GM12878 (cell line): ENCODE measurements at regions of chr4 and their contacts with region 1.

Region 1: DNA sequence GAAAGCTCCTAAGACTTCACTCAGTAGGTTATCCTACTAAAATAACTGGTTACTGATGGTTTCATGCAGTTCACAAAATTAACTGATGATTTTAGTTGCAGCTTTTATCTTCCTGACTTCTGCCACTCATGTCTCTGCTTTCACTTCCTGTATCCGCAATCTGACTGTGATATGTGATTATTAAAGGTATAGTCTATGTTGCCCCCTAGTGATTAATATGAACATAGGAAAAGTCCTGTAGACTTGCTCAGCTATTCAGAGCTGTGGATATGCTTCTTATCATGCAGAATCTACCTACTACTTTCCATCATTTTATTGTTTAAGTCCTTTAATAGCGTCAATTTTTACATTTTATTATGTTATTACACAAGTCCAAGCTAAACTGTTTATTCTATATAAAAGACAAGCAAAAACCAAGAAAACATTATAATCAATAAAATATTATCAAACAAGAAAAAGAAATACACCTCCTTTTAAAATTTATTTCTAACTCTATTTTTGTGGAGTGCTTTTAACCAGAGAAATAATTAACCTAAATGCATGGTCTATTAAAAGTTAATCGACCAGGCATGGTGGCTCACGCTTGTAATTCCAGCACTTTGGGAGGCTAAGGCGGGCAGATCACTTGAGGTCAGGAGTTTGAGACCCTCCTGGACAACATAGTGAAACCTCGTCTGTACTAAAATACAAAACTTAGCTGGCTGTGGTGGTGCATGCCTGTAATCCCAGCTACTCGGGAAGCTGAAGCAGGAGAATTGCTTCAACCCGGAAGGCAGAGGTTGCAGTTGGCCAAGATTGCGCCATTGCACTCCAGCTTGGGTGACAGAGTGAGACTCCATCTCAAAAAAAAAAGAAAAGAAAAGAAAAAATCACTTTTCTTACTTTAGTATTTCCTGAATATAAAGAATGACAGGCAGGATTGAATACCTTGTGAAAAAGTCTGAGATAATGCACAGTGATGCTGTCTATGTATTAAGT is 40.4 kb upstream of the TLR2 start:
- DNase-seq: peak; percentile 50
- ATAC-seq: peak; percentile 88
- H3K4me3 ChIP-seq: no peak overlapping the region
- H3K27ac ChIP-seq: no peak overlapping the region
- H3K4me1 ChIP-seq: peaks cover 6% of the 10 kb centered on the region; the same call in 1 of the 2 replicates
- H3K27me3 ChIP-seq: no peaks in the 10 kb centered on the region
- CTCF ChIP-seq: peak; percentile 50 to 65 (median 54); a peak in 5 of 6 replicates
- EP300 ChIP-seq: no peak
- POLR2A ChIP-seq: no peak
- RAD21 ChIP-seq: peak; percentile 78

Region 2: GRCh38 chr4:153142700-153143438 is 500.8 kb before region 1 on chr4:
- CTCF ChIA-PET with region 1: interaction called, 14 read pairs
- POLR2A ChIA-PET with region 1: interaction called, 3 read pairs
- RAD21 ChIA-PET with region 1: interaction called, 10 read pairs
- SMC1A ChIA-PET with region 1: interaction called, 6 read pairs
- in situ Hi-C with region 1: loop called (anchors 10 kb)
- intact Hi-C with region 1: loop called (anchors 2 kb)
- DNase-seq: no peak
- ATAC-seq: peak; percentile 74
- H3K4me3 ChIP-seq: no peak overlapping the region
- H3K27ac ChIP-seq: no peak overlapping the region
- H3K4me1 ChIP-seq: no peaks in the 10 kb centered on the region
- H3K27me3 ChIP-seq: peaks cover 2 to 4% of the 10 kb centered on the region in 2 experiments; a peak in 2 of 4 replicates
- CTCF ChIP-seq: peak; percentile 60 to 79 (median 63)
- EP300 ChIP-seq: no peak
- POLR2A ChIP-seq: no peak
- RAD21 ChIP-seq: peak; percentile 81

Region 3: DNA sequence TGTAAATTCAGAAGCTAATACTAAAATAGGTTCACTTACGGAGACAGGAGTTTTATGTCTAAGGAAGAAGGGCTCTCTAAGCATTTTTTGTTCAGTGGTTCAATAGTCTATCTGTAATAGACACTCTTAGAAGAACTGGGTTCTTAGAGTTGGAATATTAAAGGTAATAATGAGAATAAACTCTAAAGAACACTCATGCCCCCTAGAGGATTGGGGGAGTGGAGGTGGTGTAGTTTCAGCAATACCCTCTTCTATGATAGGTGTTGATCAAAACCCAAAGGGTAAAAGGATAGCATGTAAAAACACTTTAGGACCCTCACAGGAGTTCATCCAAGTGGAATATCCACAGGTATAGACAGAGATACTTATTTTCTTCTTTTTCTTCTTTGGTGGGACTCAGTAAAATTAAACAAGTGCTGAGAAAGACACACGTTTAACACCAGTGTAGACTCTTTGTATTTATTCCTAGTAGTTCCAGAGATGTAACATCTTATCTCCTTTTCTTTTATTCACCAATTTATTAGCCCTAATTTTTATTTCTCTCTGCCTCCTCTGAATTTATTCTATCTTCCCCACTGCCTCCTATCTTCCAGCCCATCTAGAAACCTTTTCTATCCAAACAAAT is 324.9 kb before region 1 on chr4:
- CTCF ChIA-PET with region 1: interaction called, 13 read pairs
- POLR2A ChIA-PET with region 1: no interaction called
- RAD21 ChIA-PET with region 1: interaction called, 5 read pairs
- SMC1A ChIA-PET with region 1: interaction called, 4 read pairs
- in situ Hi-C with region 1: no loop called
- intact Hi-C with region 1: no loop called
- DNase-seq: no peak
- ATAC-seq: peak; percentile 88
- H3K4me3 ChIP-seq: no peak overlapping the region
- H3K27ac ChIP-seq: no peak overlapping the region
- H3K4me1 ChIP-seq: no peaks in the 10 kb centered on the region
- H3K27me3 ChIP-seq: no peaks in the 10 kb centered on the region
- CTCF ChIP-seq: peak; percentile 62 to 68 (median 66)
- EP300 ChIP-seq: no peak
- POLR2A ChIP-seq: no peak
- RAD21 ChIP-seq: peak; percentile 78

Region 4: GRCh38 chr4:153426207-153426885 is 217.3 kb before region 1 on chr4:
- CTCF ChIA-PET with region 1: interaction called, 10 read pairs
- POLR2A ChIA-PET with region 1: no interaction called
- RAD21 ChIA-PET with region 1: interaction called, 33 read pairs
- SMC1A ChIA-PET with region 1: interaction called, 6 read pairs
- in situ Hi-C with region 1: no loop called
- intact Hi-C with region 1: no loop called
- DNase-seq: no peak
- ATAC-seq: peak; percentile 58
- H3K4me3 ChIP-seq: no peak overlapping the region
- H3K27ac ChIP-seq: 0 out of 2 replicates have a peak overlapping the region, but pooled peaks have one; percentile 4
- H3K4me1 ChIP-seq: peaks cover 20% of the 10 kb centered on the region
- H3K27me3 ChIP-seq: no peaks in the 10 kb centered on the region
- CTCF ChIP-seq: no peak
- EP300 ChIP-seq: no peak
- POLR2A ChIP-seq: no peak
- RAD21 ChIP-seq: no peak

Region 5: GRCh38 chr4:153438916-153439756 is 204.6 kb before region 1 on chr4:
- CTCF ChIA-PET with region 1: interaction called, 36 read pairs
- POLR2A ChIA-PET with region 1: no interaction called
- RAD21 ChIA-PET with region 1: interaction called, 33 read pairs
- SMC1A ChIA-PET with region 1: interaction called, 21 read pairs
- in situ Hi-C with region 1: no loop called
- intact Hi-C with region 1: no loop called
- DNase-seq: peak; percentile 79
- ATAC-seq: peak; percentile 76
- H3K4me3 ChIP-seq: peak overlapping the region; percentile 65
- H3K27ac ChIP-seq: peak overlapping the region; percentile 80
- H3K4me1 ChIP-seq: peaks cover 38% of the 10 kb centered on the region
- H3K27me3 ChIP-seq: no peaks in the 10 kb centered on the region
- CTCF ChIP-seq: 0 out of 6 replicates have a peak, but pooled peaks of 1 of the 3 experiments have one; percentile 4
- EP300 ChIP-seq: no peak
- POLR2A ChIP-seq: no peak
- RAD21 ChIP-seq: no peak

Region 6: GRCh38 chr4:153750197-153750817 is 106.6 kb after region 1 on chr4:
- CTCF ChIA-PET with region 1: interaction called, 31 read pairs
- POLR2A ChIA-PET with region 1: no interaction called
- RAD21 ChIA-PET with region 1: interaction called, 20 read pairs
- SMC1A ChIA-PET with region 1: interaction called, 18 read pairs
- in situ Hi-C with region 1: no loop called
- intact Hi-C with region 1: no loop called
- DNase-seq: peak; percentile 31
- ATAC-seq: peak; percentile 94
- H3K4me3 ChIP-seq: no peak overlapping the region
- H3K27ac ChIP-seq: no peak overlapping the region
- H3K4me1 ChIP-seq: no peaks in the 10 kb centered on the region
- H3K27me3 ChIP-seq: no peaks in the 10 kb centered on the region
- CTCF ChIP-seq: peak; percentile 69 to 81 (median 72)
- EP300 ChIP-seq: no peak
- POLR2A ChIP-seq: no peak
- RAD21 ChIP-seq: peak; percentile 84